ENCODE measurements at regions of chrX and their contacts with region 1.

Region 1: GRCh38 chrX:21985332-21985777 is 44.8 kb downstream of the SMS start:
- DNase-seq: peak; percentile 73
- ATAC-seq: peak; percentile 85
- H3K4me3 Mint-ChIP-seq: no peak overlapping the region
- H3K27ac Mint-ChIP-seq: no peak overlapping the region
- H3K4me1 Mint-ChIP-seq: peaks cover 15% of the 10 kb centered on the region
- H3K27me3 Mint-ChIP-seq: no peaks in the 10 kb centered on the region

Region 2: DNA sequence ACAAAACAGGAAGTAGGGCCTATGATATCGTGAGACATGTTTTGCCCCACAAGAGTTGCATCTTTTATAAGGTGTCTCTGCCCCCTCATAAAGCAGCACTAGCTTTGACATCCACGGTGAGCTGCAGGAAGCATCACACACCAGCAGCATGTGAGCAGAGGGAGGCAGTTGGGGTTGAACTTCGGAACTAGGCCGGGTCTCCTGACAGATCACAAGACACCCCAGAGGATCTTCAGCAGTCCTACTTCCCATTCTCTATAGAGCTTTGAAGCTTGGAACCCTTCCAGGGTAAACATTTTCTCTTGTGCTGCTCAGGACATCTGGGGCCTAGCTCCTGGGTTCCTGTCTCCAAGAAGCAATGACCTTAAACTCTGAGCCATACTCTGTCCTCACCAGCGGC is 102.1 kb before region 1 on chrX:
- CTCF ChIA-PET with region 1: no interaction called
- DNase-seq: no peak
- ATAC-seq: no peak
- H3K4me3 Mint-ChIP-seq: no peak overlapping the region
- H3K27ac Mint-ChIP-seq: no peak overlapping the region
- H3K4me1 Mint-ChIP-seq: no peaks in the 10 kb centered on the region
- H3K27me3 Mint-ChIP-seq: no peaks in the 10 kb centered on the region

Region 3: GRCh38 chrX:21972721-21973120 is 12.6 kb before region 1 on chrX:
- CTCF ChIA-PET with region 1: interaction called, 17 read pairs
- DNase-seq: peak; percentile 72
- ATAC-seq: peak; percentile 88
- H3K4me3 Mint-ChIP-seq: peak overlapping the region; percentile 51
- H3K27ac Mint-ChIP-seq: peak overlapping the region; percentile 89
- H3K4me1 Mint-ChIP-seq: peaks cover 43% of the 10 kb centered on the region
- H3K27me3 Mint-ChIP-seq: no peaks in the 10 kb centered on the region

Region 4: DNA sequence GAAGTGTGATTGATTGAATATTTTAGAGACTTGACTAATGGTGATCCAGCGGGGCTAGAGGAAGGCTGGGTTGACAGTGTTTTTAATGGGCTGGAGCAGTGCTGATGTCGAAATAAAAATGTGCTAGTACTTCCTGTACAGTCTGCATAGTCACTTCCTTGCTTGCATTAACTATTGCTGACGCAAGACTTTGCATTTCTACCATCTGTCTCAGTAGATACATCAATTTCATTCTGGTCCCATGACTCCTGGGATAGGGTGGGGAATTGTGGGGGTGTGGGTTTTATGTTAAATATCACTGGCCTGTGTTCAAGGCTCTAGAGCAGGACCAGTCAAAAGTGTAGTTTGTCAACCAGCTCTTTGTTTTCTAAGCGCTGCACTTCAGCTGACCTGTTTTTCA is 11.5 kb after region 1 on chrX:
- CTCF ChIA-PET with region 1: interaction called, 14 read pairs
- DNase-seq: no peak
- ATAC-seq: no peak
- H3K4me3 Mint-ChIP-seq: no peak overlapping the region
- H3K27ac Mint-ChIP-seq: peak overlapping the region; percentile 45
- H3K4me1 Mint-ChIP-seq: peaks cover 6% of the 10 kb centered on the region
- H3K27me3 Mint-ChIP-seq: no peaks in the 10 kb centered on the region

Region 5: DNA sequence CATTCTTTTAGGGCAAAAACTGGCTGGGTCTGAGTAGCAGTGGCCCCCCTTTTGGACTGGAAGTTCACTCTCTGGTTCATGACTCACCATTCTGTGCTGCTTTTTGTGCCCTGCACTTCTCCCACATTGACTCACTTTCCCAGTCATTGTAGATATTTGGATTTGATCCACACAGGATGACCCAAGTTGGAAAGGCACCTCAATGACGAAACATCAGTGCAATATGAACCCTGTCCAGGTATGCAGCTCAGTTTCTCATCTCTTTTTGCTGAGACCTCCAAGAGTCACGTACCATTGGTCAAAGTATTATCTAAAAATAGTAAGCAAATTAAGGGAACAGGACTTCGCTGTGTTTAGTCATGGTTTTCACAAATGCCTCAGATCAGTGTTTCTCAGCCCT is 380.1 kb after region 1 on chrX:
- CTCF ChIA-PET with region 1: no interaction called
- DNase-seq: no peak
- ATAC-seq: no peak
- H3K4me3 Mint-ChIP-seq: no peak overlapping the region
- H3K27ac Mint-ChIP-seq: no peak overlapping the region
- H3K4me1 Mint-ChIP-seq: no peaks in the 10 kb centered on the region
- H3K27me3 Mint-ChIP-seq: no peaks in the 10 kb centered on the region